Dorsolateral prefrontal cortex (tissue), 120 donors: ENCODE measurements at regions of chr2 and their contacts with region 1.

Region 1: GRCh38 chr2:196535742-196536141 is 103.8 kb upstream of the CCDC150 start:
- DNase-seq: no peak
- H3K4me3 ChIP-seq: no peak overlapping the region
- H3K27ac ChIP-seq: peak overlapping the region in 56 of 59 donors; percentile 14 to 90 (median 77)
- H3K27me3 ChIP-seq: no peaks in the 10 kb centered on the region
- CTCF ChIP-seq: peak in 36 of 56 donors; percentile 14 to 63 (median 38)

Region 2: GRCh38 chr2:196482119-196483065 is 53.4 kb before region 1 on chr2:
- intact Hi-C with region 1: loop called in 1 of 2 experiments (anchors 2 kb)
- DNase-seq: peak in 2 of 10 donors; percentile 17 to 50
- H3K4me3 ChIP-seq: no peak overlapping the region
- H3K27ac ChIP-seq: peak overlapping the region in 18 of 59 donors; percentile 6 to 52 (median 30)
- H3K27me3 ChIP-seq: no peaks in the 10 kb centered on the region
- CTCF ChIP-seq: no peak

Region 3: GRCh38 chr2:196558497-196558896 is 22.8 kb after region 1 on chr2:
- intact Hi-C with region 1: no loop called
- DNase-seq: peak in 1 of 10 donors; percentile 77
- H3K4me3 ChIP-seq: no peak overlapping the region
- H3K27ac ChIP-seq: no peak overlapping the region
- H3K27me3 ChIP-seq: no peaks in the 10 kb centered on the region
- CTCF ChIP-seq: no peak

Region 4: GRCh38 chr2:196639180-196640030 is 103.7 kb after region 1 on chr2 and contains the start of gene CCDC150:
- intact Hi-C with region 1: loop called in 1 of 2 experiments (anchors 2 kb)
- DNase-seq: peak; percentile 87 to 97 (median 94)
- H3K4me3 ChIP-seq: peak within 1 kb of the TSS; percentile 34 to 89 (median 74)
- H3K27ac ChIP-seq: peak within 1 kb of the TSS in 36 of 59 donors; percentile 4 to 73 (median 46)
- H3K27me3 ChIP-seq: no peaks in the 10 kb centered on the region
- CTCF ChIP-seq: peak in 51 of 56 donors; percentile 24 to 71 (median 52)
- total RNA-seq, gene CCDC150: 0.67 to 10.5 (median 4.1) TPM